ENCODE measurements at regions of chr3 and their contacts with region 1.

Region 1: DNA sequence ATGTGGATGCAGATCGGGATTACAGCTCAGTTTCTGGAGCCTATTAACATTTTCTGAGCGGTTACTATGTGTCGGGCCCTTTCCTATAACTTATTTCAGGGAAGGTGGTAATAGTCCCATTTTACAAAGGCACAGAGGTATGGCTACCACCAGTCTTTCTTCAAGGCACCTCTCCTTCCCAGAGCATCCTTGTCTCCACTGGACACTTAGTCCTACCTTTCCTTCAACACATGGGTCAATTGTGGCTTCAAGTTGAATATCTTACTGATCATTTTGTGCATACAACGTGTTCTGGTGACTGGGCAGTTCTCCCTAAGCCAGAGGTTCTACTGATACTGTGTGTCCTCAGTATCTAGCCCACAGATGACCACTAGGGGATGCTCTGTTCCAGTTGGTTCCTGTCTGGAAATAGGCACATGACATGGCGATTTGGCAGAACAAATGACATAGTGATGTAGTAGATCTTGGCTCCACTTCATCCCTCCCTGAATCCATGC is 60.7 kb upstream of the CMTM8 start:
- DNase-seq: peak in 1 of 2 experiments; percentile 73
- H3K4me3 ChIP-seq: no peak overlapping the region
- H3K27ac ChIP-seq: no peak overlapping the region
- H3K4me1 ChIP-seq: peaks cover 0 to 3% (median 0%) of the 10 kb centered on the region in 4 experiments; a peak in 1 of 7 replicates
- H3K27me3 ChIP-seq: no peaks in the 10 kb centered on the region
- CTCF ChIP-seq: peak; percentile 55 to 100 (median 96)
- EP300 ChIP-seq: no peak
- POLR2A ChIP-seq: no peak
- RAD21 ChIP-seq: peak; percentile 89 to 90

Region 2: DNA sequence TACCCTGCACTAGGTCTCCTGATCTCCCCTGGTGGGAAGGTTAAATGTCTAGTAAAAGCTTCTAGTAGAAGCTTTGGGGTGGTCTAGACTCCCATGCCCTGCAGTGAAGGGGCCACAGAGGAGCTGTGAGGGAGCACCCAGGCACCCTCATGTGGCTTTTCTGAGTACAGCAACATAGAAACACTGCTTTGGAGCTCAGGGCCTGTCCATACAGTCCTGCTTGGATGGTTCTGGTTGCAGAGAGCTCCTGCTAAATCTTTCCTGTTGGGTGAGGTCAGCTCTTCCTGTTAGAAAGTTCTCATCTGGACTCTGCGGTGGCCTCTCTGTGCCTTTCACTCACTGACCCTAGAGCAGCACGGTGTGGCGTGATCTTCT is 23.6 kb before region 1 on chr3:
- CTCF ChIA-PET with region 1: interaction called, 16 read pairs
- POLR2A ChIA-PET with region 1: no interaction called
- DNase-seq: no peak
- H3K4me3 ChIP-seq: no peak overlapping the region
- H3K27ac ChIP-seq: no peak overlapping the region
- H3K4me1 ChIP-seq: no peaks in the 10 kb centered on the region; a peak in 1 of 7 replicates
- H3K27me3 ChIP-seq: no peaks in the 10 kb centered on the region
- CTCF ChIP-seq: peak; percentile 50 to 71 (median 56)
- EP300 ChIP-seq: no peak
- POLR2A ChIP-seq: no peak
- RAD21 ChIP-seq: peak; percentile 76 to 79

Region 3: GRCh38 chr3:32238453-32239306 is 60.9 kb after region 1 on chr3 and contains the start of gene CMTM8:
- CTCF ChIA-PET with region 1: interaction called, 40 read pairs
- POLR2A ChIA-PET with region 1: no interaction called
- DNase-seq: peak in 1 of 2 experiments; percentile 77
- H3K4me3 ChIP-seq: peak within 1 kb of the TSS; percentile 54 to 72 (median 64)
- H3K27ac ChIP-seq: no peak within 1 kb of the TSS
- H3K4me1 ChIP-seq: peaks cover 0 to 8% (median 4%) of the 10 kb centered on the region in 4 experiments; a peak in 5 of 7 replicates
- H3K27me3 ChIP-seq: peaks cover 2 to 31% (median 19%) of the 10 kb centered on the region in 4 experiments
- CTCF ChIP-seq: no peak
- EP300 ChIP-seq: no peak
- POLR2A ChIP-seq: no peak
- RAD21 ChIP-seq: no peak
- total RNA-seq, gene CMTM8: 10.5 and 11.7 TPM in 2 replicates

Region 4: DNA sequence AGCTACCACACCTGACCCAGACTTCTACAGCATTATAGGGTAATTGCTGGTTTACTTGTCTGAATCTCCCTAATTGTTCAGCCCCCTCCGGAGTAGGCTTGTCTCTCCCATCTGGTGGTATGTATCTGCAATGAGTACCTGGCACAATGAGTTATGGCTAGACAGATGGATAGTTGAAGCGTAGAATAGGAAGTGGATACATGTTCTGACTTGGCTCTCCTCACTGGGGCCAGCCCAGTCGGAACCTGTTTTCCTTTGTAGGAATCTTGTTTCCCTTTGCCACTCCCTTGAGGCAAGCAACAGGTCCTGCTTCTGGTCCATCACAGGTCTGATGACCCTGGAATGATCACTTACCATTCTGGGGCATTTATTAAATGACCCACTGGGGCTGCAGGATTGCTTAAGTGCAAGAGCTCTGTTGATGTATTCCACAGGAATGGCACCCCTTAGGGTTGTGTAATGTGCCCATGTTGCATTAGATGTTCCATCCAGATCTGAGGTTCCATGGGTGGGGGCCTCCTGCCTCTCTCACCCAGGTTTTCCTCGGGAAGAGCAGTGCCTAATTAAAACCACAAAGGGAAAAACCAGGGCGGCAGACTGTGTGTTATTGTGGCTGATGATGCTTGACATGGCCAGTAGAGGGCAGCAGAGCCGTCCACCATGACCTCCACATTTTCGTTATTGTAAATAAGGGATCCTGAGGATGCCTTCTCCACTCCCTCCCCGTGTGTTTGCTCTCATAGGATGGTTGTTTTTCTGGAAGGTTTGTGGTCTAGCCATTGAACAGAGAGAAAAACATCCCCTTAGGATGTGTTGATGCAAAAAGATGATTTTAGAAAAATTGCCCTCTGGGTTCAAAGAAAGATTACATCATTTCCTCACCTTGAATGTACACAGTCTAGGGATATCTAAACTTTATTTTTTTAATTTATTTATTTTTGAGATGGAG is 118.8 kb after region 1 on chr3:
- CTCF ChIA-PET with region 1: interaction called, 39 read pairs
- POLR2A ChIA-PET with region 1: no interaction called
- DNase-seq: peak; percentile 44 to 73
- H3K4me3 ChIP-seq: no peak overlapping the region
- H3K27ac ChIP-seq: no peak overlapping the region
- H3K4me1 ChIP-seq: peaks cover 0 to 3% (median 0%) of the 10 kb centered on the region in 4 experiments; a peak in 2 of 7 replicates
- H3K27me3 ChIP-seq: no peaks in the 10 kb centered on the region
- CTCF ChIP-seq: peak; percentile 87 to 95 (median 88)
- EP300 ChIP-seq: no peak
- POLR2A ChIP-seq: no peak
- RAD21 ChIP-seq: peak; percentile 87 to 89

Region 5: GRCh38 chr3:32340039-32340438 is 162.3 kb after region 1 on chr3:
- CTCF ChIA-PET with region 1: interaction called, 97 read pairs
- POLR2A ChIA-PET with region 1: no interaction called
- DNase-seq: no peak
- H3K4me3 ChIP-seq: no peak overlapping the region
- H3K27ac ChIP-seq: no peak overlapping the region
- H3K4me1 ChIP-seq: no peaks in the 10 kb centered on the region; a peak in 1 of 7 replicates
- H3K27me3 ChIP-seq: no peaks in the 10 kb centered on the region
- CTCF ChIP-seq: peak; percentile 32 to 77 (median 68)
- EP300 ChIP-seq: no peak
- POLR2A ChIP-seq: no peak
- RAD21 ChIP-seq: peak; percentile 90 to 91

Region 6: DNA sequence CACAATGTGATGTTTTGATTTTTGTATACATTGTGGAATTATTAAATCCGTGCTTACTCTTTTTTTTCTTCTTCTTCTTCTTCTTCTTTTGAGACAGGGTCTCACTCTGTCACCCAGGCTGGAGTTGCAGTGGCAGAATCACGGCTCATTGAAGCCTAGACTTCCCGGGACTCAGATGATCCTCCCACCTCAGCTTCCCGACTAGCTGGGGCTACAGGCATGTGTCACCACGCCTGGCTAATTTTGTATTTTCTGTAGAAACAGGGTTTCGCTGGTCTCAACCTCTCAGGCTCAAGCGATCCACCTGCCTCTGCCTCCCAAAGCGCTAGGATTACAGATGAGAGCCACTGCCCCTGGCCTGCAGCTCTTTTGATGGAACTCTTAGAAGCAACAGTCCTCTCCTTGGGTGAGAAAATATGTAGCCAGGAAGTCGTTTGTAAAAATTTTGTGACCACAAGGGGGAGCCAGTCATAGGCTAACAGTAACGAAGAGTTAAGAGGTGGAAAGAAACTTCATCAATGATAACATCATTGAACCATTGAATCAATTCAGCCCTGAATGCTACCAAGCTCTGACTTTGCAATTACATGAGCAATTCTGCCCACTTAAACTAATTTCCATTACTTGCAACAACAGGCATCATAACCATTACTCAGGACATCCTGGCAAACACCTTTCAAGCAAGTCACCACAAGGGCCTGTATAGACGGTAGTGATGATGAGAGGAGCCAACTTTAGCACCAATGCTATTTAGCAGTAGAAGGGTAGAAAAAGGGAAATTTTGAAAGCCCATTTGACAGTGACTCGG is 197.2 kb after region 1 on chr3:
- CTCF ChIA-PET with region 1: interaction called, 23 read pairs
- POLR2A ChIA-PET with region 1: no interaction called
- DNase-seq: peak in 1 of 2 experiments; percentile 82
- H3K4me3 ChIP-seq: no peak overlapping the region
- H3K27ac ChIP-seq: no peak overlapping the region
- H3K4me1 ChIP-seq: no peaks in the 10 kb centered on the region
- H3K27me3 ChIP-seq: no peaks in the 10 kb centered on the region
- CTCF ChIP-seq: peak in 2 of 3 experiments; percentile 64 to 72; a peak in 3 of 4 replicates
- EP300 ChIP-seq: no peak
- POLR2A ChIP-seq: no peak
- RAD21 ChIP-seq: peak; percentile 57 to 71

Region 7: GRCh38 chr3:32531010-32531647 is 353.4 kb after region 1 on chr3:
- CTCF ChIA-PET with region 1: no interaction called
- POLR2A ChIA-PET with region 1: no interaction called
- DNase-seq: no peak
- H3K4me3 ChIP-seq: no peak overlapping the region
- H3K27ac ChIP-seq: no peak overlapping the region
- H3K4me1 ChIP-seq: no peaks in the 10 kb centered on the region
- H3K27me3 ChIP-seq: no peaks in the 10 kb centered on the region
- CTCF ChIP-seq: no peak
- EP300 ChIP-seq: no peak
- POLR2A ChIP-seq: no peak
- RAD21 ChIP-seq: no peak

Measured in H1 (cell line).